Calu3 (cell line): ENCODE measurements at regions of chrX and their contacts with region 1.

Region 1: GRCh38 chrX:87338510-87338909 is 179.1 kb upstream of the KLHL4 start:
- DNase-seq: no peak
- H3K4me3 Mint-ChIP-seq: no peak overlapping the region
- H3K27ac Mint-ChIP-seq: no peak overlapping the region
- H3K4me1 Mint-ChIP-seq: no peaks in the 10 kb centered on the region
- H3K27me3 Mint-ChIP-seq: no peaks in the 10 kb centered on the region
- CTCF ChIP-seq: no peak

Region 2: GRCh38 chrX:87409113-87409841 is 70.8 kb after region 1 on chrX:
- CTCF ChIA-PET with region 1: no interaction called
- intact Hi-C with region 1: no loop called
- DNase-seq: peak; percentile 22
- H3K4me3 Mint-ChIP-seq: no peak overlapping the region
- H3K27ac Mint-ChIP-seq: no peak overlapping the region
- H3K4me1 Mint-ChIP-seq: no peaks in the 10 kb centered on the region
- H3K27me3 Mint-ChIP-seq: no peaks in the 10 kb centered on the region
- CTCF ChIP-seq: no peak

Region 3: GRCh38 chrX:87664381-87664780 is 325.9 kb after region 1 on chrX:
- CTCF ChIA-PET with region 1: no interaction called
- intact Hi-C with region 1: loop called (anchors 1 kb)
- DNase-seq: no peak
- H3K4me3 Mint-ChIP-seq: no peak overlapping the region
- H3K27ac Mint-ChIP-seq: no peak overlapping the region
- H3K4me1 Mint-ChIP-seq: no peaks in the 10 kb centered on the region
- H3K27me3 Mint-ChIP-seq: no peaks in the 10 kb centered on the region
- CTCF ChIP-seq: no peak